ENCODE measurements at regions of chr5 and their contacts with region 1.

Region 1: DNA sequence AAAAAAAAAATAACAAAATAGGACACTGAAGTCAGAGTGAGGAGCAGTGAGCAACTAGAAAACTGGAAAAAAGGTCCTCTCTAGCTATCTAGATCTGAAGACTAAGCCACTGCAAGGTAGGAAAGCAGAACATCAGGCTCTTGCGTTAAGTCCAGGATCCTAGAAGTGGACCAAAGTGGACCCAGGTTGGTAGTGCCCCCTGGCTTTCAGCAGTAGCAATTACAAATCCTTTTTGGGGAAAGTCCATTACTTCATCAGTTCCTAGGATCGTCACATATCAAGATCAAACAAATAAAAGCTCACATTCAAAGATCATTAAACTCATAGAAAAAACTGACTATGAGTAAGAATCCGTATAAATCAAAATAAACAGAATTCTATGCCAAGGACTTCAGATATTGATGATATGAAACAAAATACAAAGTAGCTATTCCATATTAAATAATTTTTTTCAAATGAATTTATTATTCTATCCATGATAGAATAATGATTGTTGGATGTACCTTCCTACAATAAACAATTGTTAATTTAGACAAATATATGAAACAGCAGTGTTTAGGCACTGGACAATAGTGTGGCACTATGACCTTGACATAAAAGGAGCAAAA is 6.5 kb upstream of the RICTOR start:
- DNase-seq: no peak
- ATAC-seq: peak; percentile 83 to 93 (median 91)
- H3K4me3 ChIP-seq: no peak overlapping the region
- H3K27ac ChIP-seq: no peak overlapping the region
- H3K4me1 ChIP-seq: peaks cover 21% of the 10 kb centered on the region
- H3K27me3 ChIP-seq: no peaks in the 10 kb centered on the region
- CTCF ChIP-seq: peak; percentile 92

Region 2: GRCh38 chr5:38445374-38446028 is 635.2 kb before region 1 on chr5:
- intact Hi-C with region 1: no loop called
- DNase-seq: peak; percentile 71 to 79
- ATAC-seq: peak; percentile 60 to 79 (median 78)
- H3K4me3 ChIP-seq: peak overlapping the region; percentile 81
- H3K27ac ChIP-seq: peak overlapping the region; percentile 94
- H3K4me1 ChIP-seq: peaks cover 34% of the 10 kb centered on the region
- H3K27me3 ChIP-seq: no peaks in the 10 kb centered on the region
- CTCF ChIP-seq: no peak

Region 3: GRCh38 chr5:38831909-38832308 is 248.8 kb before region 1 on chr5:
- intact Hi-C with region 1: no loop called
- DNase-seq: no peak
- ATAC-seq: peak in 2 of 4 donors; percentile 60 to 71
- H3K4me3 ChIP-seq: no peak overlapping the region
- H3K27ac ChIP-seq: no peak overlapping the region
- H3K4me1 ChIP-seq: no peaks in the 10 kb centered on the region
- H3K27me3 ChIP-seq: no peaks in the 10 kb centered on the region
- CTCF ChIP-seq: peak; percentile 32

Region 4: GRCh38 chr5:38997591-38997990 is 83.1 kb before region 1 on chr5:
- intact Hi-C with region 1: loop called (anchors 5 kb)
- DNase-seq: no peak
- ATAC-seq: peak in 2 of 4 donors; percentile 50 to 63
- H3K4me3 ChIP-seq: no peak overlapping the region
- H3K27ac ChIP-seq: peak overlapping the region; percentile 24
- H3K4me1 ChIP-seq: peaks cover 18% of the 10 kb centered on the region
- H3K27me3 ChIP-seq: no peaks in the 10 kb centered on the region
- CTCF ChIP-seq: no peak

Region 5: DNA sequence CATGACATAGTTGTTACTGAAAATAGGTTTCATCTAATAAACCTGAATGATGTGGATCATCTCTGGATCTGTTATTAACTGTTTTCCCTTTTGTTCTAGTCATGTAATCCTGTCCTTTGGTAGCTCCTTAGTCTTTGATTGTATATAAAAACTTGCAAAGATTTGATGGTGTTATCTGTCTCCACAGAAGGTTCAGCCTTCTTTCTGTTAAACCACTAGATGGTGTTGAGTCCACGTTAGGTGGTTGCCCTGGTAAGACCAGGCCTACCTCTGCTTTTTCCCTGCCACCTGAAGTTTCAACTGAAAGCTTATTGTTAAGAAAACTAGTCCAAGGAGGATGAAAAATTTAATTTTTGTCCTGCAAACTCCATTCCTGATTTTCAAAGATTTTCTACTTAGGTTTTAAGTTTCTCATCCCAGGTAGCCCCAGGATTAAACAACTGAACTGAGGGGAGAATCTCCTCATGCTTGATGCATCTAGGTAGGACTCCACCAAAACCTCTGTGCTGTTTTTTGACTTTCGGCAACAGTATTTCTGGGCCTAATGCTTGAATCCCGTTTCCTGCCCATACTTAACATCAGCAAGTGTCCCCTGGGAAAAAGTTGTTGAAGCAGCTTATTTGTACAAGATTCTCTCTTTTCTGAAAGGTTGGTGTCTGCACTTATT is 75.0 kb before region 1 on chr5:
- intact Hi-C with region 1: loop called in 1 of 2 experiments (anchors 2 kb)
- DNase-seq: no peak
- ATAC-seq: peak; percentile 76 to 92 (median 80)
- H3K4me3 ChIP-seq: no peak overlapping the region
- H3K27ac ChIP-seq: peak overlapping the region; percentile 12
- H3K4me1 ChIP-seq: no peaks in the 10 kb centered on the region
- H3K27me3 ChIP-seq: no peaks in the 10 kb centered on the region
- CTCF ChIP-seq: peak; percentile 63

Region 6: GRCh38 chr5:39274398-39275085 is 193.8 kb after region 1 on chr5:
- intact Hi-C with region 1: no loop called
- DNase-seq: no peak
- ATAC-seq: no peak
- H3K4me3 ChIP-seq: peak overlapping the region; percentile 30
- H3K27ac ChIP-seq: peak overlapping the region; percentile 43
- H3K4me1 ChIP-seq: no peaks in the 10 kb centered on the region
- H3K27me3 ChIP-seq: no peaks in the 10 kb centered on the region
- CTCF ChIP-seq: no peak